Posterior cingulate gyrus (tissue), 11 donors: ENCODE measurements at regions of chr19 and their contacts with region 1.

Region 1: GRCh38 chr19:9785367-9786331 is 17.1 kb upstream of the ZNF846 start:
- DNase-seq: peak; percentile 83 to 99 (median 91)

Region 2: GRCh38 chr19:9674663-9675357 is 110.8 kb before region 1 on chr19 and contains the start of gene ZNF562:
- intact Hi-C with region 1: loop called (anchors 10 kb)
- DNase-seq: peak; percentile 81 to 98 (median 88)